B cell (primary cell): ENCODE measurements at regions of chr15 and their contacts with region 1.

Region 1: DNA sequence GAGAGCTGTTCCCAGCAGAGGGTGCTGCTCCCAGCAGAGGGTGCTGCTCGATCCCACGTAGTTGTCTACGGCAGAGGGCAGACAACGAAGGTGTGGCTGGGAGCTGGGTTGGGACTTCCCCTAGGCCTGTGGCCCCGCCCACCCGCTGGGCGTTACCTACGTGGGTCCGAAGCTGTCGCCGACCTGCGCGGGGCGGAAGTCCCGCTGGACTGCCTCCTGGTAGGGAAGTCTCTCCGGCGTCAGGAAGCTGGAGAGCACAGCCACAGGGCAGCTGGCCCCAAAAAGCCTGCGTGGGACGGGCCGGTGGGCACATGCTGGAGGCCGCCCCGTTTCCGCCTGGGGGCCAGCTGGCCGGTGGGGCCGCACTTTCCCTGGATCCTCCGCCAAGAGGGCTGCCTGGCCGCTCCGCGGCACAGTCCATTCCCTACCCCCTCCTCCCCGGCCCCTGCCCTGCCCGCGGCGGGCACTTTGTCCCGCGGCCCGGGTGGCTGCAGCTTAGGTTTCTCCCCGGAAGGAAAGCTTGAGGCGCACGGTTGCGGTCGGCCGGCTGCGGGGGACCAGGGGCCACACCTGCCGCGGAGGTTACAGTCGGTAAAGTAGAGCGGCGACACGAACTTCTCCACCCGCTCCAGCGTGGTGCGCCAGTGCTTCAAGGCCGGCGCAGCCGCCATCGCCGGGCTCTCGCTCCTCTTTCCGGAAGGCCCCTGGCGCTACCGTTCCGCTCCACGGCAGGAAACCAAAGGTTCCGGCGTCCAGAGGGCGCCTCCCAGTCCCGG is at the start of gene MAN2C1:
- DNase-seq: peak; percentile 97
- ATAC-seq: peak; percentile 92
- H3K4me3 ChIP-seq: peak within 1 kb of the TSS; percentile 74 to 96 (median 87)
- H3K4me3 Mint-ChIP-seq: peak within 1 kb of the TSS; percentile 93
- H3K27ac ChIP-seq: peak within 1 kb of the TSS; percentile 98 to 99
- H3K27ac Mint-ChIP-seq: peak within 1 kb of the TSS; percentile 95
- H3K4me1 ChIP-seq: peaks cover 13 to 19% of the 10 kb centered on the region in 2 donors
- H3K4me1 Mint-ChIP-seq: peaks cover 27% of the 10 kb centered on the region
- H3K27me3 ChIP-seq: no peaks in the 10 kb centered on the region
- H3K27me3 Mint-ChIP-seq: no peaks in the 10 kb centered on the region
- CTCF ChIP-seq: peak; percentile 74
- total RNA-seq, gene MAN2C1: 227 and 229 TPM in 2 replicates

Region 2: GRCh38 chr15:75335705-75336355 is 32.3 kb before region 1 on chr15 and contains the start of gene COMMD4:
- CTCF ChIA-PET with region 1: interaction called, 13 read pairs
- POLR2A ChIA-PET with region 1: interaction called, 4 read pairs
- intact Hi-C with region 1: loop called (anchors 1 kb)
- DNase-seq: peak; percentile 81
- ATAC-seq: peak; percentile 84
- H3K4me3 ChIP-seq: peak within 1 kb of the TSS; percentile 34 to 93 (median 83)
- H3K4me3 Mint-ChIP-seq: peak within 1 kb of the TSS; percentile 96
- H3K27ac ChIP-seq: peak within 1 kb of the TSS; percentile 55 to 76
- H3K27ac Mint-ChIP-seq: peak within 1 kb of the TSS; percentile 90
- H3K4me1 ChIP-seq: peaks cover 9 to 16% of the 10 kb centered on the region in 2 donors
- H3K4me1 Mint-ChIP-seq: peaks cover 18% of the 10 kb centered on the region
- H3K27me3 ChIP-seq: no peaks in the 10 kb centered on the region
- H3K27me3 Mint-ChIP-seq: peaks cover 4% of the 10 kb centered on the region
- CTCF ChIP-seq: no peak
- total RNA-seq, gene COMMD4: 54.2 and 63.5 TPM in 2 replicates

Region 3: DNA sequence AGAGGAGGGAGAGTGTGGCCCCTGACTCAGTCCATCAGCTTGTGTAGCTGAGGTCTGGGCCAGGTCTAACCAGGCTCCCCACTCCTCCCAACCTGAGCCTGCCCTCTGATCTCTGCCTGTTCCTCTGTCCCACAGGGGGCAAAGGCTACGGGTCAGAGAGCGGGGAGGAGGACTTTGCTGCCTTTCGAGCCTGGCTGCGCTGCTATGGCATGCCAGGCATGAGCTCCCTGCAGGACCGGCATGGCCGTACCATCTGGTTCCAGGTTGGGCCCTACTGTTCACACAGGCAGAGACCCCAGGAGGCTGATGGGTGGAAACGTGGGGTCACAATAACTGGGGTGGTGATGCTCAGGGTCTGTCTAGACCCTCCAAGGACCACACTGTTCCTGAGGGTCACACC is 14.5 kb before region 1 on chr15:
- CTCF ChIA-PET with region 1: interaction called, 52 read pairs
- POLR2A ChIA-PET with region 1: interaction called, 25 read pairs
- intact Hi-C with region 1: loop called (anchors 1 kb)
- DNase-seq: no peak
- ATAC-seq: no peak
- H3K4me3 ChIP-seq: no peak overlapping the region
- H3K4me3 Mint-ChIP-seq: no peak overlapping the region
- H3K27ac ChIP-seq: no peak overlapping the region
- H3K27ac Mint-ChIP-seq: no peak overlapping the region
- H3K4me1 ChIP-seq: peaks cover 25% of the 10 kb centered on the region in 2 donors
- H3K4me1 Mint-ChIP-seq: peaks cover 23% of the 10 kb centered on the region
- H3K27me3 ChIP-seq: no peaks in the 10 kb centered on the region
- H3K27me3 Mint-ChIP-seq: no peaks in the 10 kb centered on the region
- CTCF ChIP-seq: no peak

Region 4: DNA sequence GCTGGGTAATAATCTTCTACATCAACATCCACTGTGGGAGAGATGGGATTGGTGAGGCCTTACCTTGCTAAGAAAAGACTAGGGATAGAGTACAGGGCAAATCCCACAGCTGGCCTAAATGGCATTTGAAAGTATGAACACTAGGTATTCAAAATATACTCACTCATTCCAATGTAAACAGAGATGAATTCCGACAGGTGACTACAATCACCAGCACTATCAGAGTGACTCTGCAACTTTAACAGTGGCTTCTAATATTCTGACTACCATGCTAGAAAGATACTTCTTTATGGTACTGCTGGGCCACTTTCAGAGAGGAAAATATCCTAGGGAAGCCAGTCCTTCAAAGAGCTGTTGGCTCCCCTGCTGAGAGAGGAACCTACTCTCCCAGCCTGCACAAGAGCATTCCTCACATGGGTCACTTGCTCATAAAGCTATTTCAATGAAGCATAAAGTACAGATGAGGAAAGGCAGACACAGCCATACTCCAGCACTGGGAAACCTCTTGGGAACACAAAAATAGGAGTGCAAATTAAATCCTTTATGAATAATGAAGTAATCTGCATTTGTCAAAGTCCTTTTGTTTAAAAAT is 21.8 kb after region 1 on chr15:
- CTCF ChIA-PET with region 1: interaction called, 12 read pairs
- POLR2A ChIA-PET with region 1: no interaction called
- intact Hi-C with region 1: no loop called
- DNase-seq: no peak
- ATAC-seq: no peak
- H3K4me3 ChIP-seq: no peak overlapping the region
- H3K4me3 Mint-ChIP-seq: no peak overlapping the region
- H3K27ac ChIP-seq: no peak overlapping the region
- H3K27ac Mint-ChIP-seq: no peak overlapping the region
- H3K4me1 ChIP-seq: peaks cover 16 to 20% of the 10 kb centered on the region in 2 donors
- H3K4me1 Mint-ChIP-seq: peaks cover 19% of the 10 kb centered on the region
- H3K27me3 ChIP-seq: no peaks in the 10 kb centered on the region
- H3K27me3 Mint-ChIP-seq: no peaks in the 10 kb centered on the region
- CTCF ChIP-seq: no peak

Region 5: DNA sequence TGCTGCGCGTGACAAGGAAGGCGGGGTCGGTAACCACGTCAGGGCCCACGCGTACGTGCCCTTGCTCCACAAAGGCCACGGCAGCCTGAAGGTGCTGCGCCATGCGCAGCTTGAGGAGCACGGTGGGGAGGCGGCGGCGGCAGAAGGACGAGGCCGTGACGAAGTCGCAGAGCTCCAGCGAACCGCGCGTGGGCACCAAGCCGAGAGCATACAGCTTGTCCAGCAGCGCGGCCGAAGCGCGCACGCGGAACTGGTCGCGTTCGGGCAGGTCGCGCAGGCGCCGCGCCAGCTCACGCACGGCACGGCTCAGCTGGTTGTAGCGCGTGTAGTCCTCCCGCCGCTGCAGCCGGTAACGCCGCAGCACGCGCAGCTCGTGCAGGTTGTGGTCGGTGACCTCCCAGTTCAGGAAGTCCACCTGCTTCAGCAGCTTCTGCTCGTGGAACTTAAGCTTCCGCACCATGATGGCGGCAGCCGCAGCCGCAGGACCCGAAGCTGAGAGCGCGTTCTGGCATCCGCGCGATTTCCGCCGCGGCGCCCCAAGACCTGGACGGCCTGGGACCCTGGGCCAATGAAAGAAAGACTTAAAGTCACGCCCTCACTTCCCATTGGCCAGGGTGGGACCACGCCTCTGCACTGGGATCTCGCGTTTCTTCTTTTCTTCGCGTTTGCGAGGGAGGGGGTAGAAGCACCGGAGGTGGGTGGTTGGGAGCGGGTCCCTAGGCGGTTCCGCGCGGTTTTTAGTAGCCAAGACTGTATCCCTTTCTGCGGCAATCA is 271.8 kb after region 1 on chr15 and contains the start of gene IMP3:
- CTCF ChIA-PET with region 1: interaction called, 29 read pairs
- POLR2A ChIA-PET with region 1: interaction called, 18 read pairs
- intact Hi-C with region 1: loop called (anchors 1 kb)
- DNase-seq: peak; percentile 96
- ATAC-seq: peak; percentile 93
- H3K4me3 ChIP-seq: peak within 1 kb of the TSS; percentile 72 to 91 (median 84)
- H3K4me3 Mint-ChIP-seq: peak within 1 kb of the TSS; percentile 95
- H3K27ac ChIP-seq: peak within 1 kb of the TSS; percentile 78 to 81
- H3K27ac Mint-ChIP-seq: peak within 1 kb of the TSS; percentile 96
- H3K4me1 ChIP-seq: peaks cover 29 to 36% of the 10 kb centered on the region in 2 donors
- H3K4me1 Mint-ChIP-seq: peaks cover 40% of the 10 kb centered on the region
- H3K27me3 ChIP-seq: peaks cover 0 to 4% (median 0%) of the 10 kb centered on the region in 4 experiments
- H3K27me3 Mint-ChIP-seq: no peaks in the 10 kb centered on the region
- CTCF ChIP-seq: no peak
- total RNA-seq, gene IMP3: 60.8 and 62.9 TPM in 2 replicates

Region 6: DNA sequence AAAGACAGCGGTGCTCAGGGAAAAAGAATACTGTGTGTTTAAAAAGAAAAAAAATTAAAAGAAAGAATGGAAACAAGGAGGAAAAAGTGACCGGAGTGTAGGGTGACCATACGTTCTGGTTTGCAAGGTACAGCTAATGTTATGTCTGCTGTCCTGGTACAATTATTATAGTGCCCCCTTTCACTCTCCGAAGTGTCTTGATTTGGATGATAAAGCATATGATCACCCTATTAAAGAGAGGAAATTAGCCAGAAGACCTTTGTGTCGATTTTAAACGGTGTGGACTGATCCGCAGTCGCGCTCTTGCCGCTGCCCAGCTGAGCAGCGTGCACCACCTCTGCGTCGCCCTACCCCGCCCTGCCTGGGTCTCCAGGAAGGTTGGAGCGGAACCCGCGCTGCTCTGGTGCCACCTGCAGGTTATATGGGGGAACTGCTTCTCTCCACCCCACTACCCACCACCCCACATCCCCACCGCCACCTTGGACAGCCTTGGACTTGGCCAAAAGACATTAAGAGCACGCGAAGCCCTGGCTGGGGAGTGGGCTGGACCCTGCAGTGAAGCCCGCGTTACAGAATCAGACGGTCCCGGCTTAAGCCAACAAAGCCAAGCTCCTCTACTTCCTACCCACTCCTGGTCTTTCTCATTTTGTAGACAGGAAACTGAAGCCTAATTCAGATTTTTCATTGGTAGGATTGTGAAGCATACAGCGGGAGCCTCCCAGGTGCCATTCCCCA is 433.9 kb after region 1 on chr15:
- CTCF ChIA-PET with region 1: interaction called, 10 read pairs
- POLR2A ChIA-PET with region 1: no interaction called
- intact Hi-C with region 1: no loop called
- DNase-seq: peak; percentile 86
- ATAC-seq: peak; percentile 100
- H3K4me3 ChIP-seq: peak overlapping the region in 2 of 5 experiments; percentile 23 to 37
- H3K4me3 Mint-ChIP-seq: peak overlapping the region; percentile 55
- H3K27ac ChIP-seq: no peak overlapping the region
- H3K27ac Mint-ChIP-seq: no peak overlapping the region
- H3K4me1 ChIP-seq: peaks cover 4 to 8% of the 10 kb centered on the region in 2 donors
- H3K4me1 Mint-ChIP-seq: peaks cover 6% of the 10 kb centered on the region
- H3K27me3 ChIP-seq: peaks cover 0 to 18% (median 9%) of the 10 kb centered on the region in 4 experiments
- H3K27me3 Mint-ChIP-seq: peaks cover 55% of the 10 kb centered on the region
- CTCF ChIP-seq: peak; percentile 93